Ovary (tissue), 10 donors: ENCODE measurements at regions of chr18 and their contacts with region 1.

Region 1: GRCh38 chr18:49510393-49511115 is 23.5 kb upstream of the C18orf32 start:
- DNase-seq: peak; percentile 13 to 56 (median 41)
- H3K4me3 ChIP-seq: no peak overlapping the region
- H3K27ac ChIP-seq: no peak overlapping the region
- H3K4me1 ChIP-seq: no peaks in the 10 kb centered on the region
- H3K27me3 ChIP-seq: no peaks in the 10 kb centered on the region
- CTCF ChIP-seq: peak in 1 of 3 donors; percentile 37
- EP300 ChIP-seq: no peak
- POLR2A ChIP-seq: no peak

Region 2: GRCh38 chr18:49656073-49656591 is 145.6 kb after region 1 on chr18:
- intact Hi-C with region 1: no loop called
- DNase-seq: no peak
- H3K4me3 ChIP-seq: no peak overlapping the region
- H3K27ac ChIP-seq: no peak overlapping the region
- H3K4me1 ChIP-seq: peaks cover 4% of the 10 kb centered on the region
- H3K27me3 ChIP-seq: no peaks in the 10 kb centered on the region
- CTCF ChIP-seq: no peak
- EP300 ChIP-seq: no peak
- POLR2A ChIP-seq: no peak

Region 3: DNA sequence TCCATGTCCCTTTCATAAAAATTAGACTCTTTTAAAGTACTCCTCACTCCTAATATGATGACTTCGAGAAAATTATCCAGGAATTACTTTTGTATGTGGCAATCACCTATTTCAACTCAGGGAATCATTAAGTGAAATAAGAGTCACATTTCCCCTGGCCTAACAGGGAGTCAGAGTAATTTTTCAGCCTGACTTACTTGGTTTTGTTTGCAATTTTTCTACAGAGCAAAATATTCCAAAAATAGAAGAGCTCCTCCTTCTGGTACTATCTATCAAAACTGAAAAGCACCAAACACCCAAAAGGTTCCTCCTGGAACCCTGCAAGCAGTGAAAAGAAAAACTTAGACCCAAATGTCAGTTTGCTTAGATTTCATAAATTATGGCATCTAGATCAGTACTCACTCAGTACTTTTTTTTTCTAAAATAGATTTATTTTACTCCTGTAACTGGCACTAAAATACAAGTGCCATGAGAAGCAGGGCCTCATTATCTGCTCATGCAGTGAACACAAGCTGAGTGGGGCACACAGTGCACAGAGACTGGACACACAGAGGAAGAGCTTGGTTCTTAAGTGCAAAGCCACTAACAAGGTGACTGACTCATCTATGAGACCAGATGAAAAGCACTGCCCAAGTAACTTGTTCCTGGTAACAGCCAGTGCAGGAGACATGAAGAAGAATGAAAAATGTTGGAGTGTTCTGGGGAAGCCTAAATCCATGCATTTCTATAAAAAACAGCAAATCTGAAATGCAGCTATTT is 274.1 kb after region 1 on chr18:
- intact Hi-C with region 1: loop called in 1 of 4 experiments (anchors 10 kb)
- DNase-seq: no peak
- H3K4me3 ChIP-seq: no peak overlapping the region
- H3K27ac ChIP-seq: no peak overlapping the region
- H3K4me1 ChIP-seq: no peaks in the 10 kb centered on the region
- H3K27me3 ChIP-seq: no peaks in the 10 kb centered on the region
- CTCF ChIP-seq: peak in 1 of 3 donors; percentile 12
- EP300 ChIP-seq: no peak
- POLR2A ChIP-seq: no peak

Region 4: GRCh38 chr18:49849331-49850217 is 339.0 kb after region 1 on chr18:
- intact Hi-C with region 1: loop called in 2 of 4 experiments (anchors 5 to 10 kb)
- DNase-seq: peak in 4 of 5 donors; percentile 21 to 46 (median 36)
- H3K4me3 ChIP-seq: no peak overlapping the region
- H3K27ac ChIP-seq: no peak overlapping the region
- H3K4me1 ChIP-seq: no peaks in the 10 kb centered on the region
- H3K27me3 ChIP-seq: no peaks in the 10 kb centered on the region
- CTCF ChIP-seq: no peak
- EP300 ChIP-seq: no peak
- POLR2A ChIP-seq: no peak

Region 5: DNA sequence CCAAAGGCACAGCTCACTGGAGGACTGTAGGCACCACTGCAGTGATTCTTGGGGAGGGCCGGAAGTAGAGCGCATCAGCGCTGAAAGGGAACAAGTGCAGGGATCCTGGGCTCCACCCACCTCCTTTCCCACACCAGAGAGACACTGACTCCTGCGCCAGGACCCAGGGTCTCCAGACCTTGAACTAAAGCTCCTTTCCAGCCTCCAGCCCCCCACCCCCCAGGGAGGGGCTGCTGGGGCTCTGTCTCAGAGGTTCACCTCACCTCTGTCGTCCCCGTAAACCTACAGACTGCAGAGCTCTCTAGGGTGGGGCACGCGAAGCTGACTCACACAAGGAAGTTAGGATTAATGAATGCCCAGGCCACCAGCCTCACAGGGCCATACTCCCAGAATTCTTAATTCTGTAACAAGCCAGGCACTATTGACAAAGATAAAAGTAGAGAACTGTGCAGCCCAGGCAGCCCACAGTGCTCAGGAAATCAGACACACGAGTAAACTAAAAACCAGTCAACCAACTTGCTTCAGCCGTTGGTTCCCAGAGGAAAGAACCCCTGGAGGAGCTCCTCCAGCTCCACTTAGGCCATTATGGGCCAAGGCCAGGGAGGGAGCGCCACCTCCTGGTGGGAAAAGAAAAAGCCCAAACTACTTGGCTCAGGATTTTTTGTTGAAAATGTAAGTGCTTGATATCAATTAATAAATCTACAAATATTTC is 347.9 kb after region 1 on chr18:
- intact Hi-C with region 1: loop called in 3 of 4 experiments (anchors 5 to 10 kb)
- DNase-seq: peak; percentile 32 to 76 (median 61)
- H3K4me3 ChIP-seq: no peak overlapping the region
- H3K27ac ChIP-seq: no peak overlapping the region
- H3K4me1 ChIP-seq: no peaks in the 10 kb centered on the region
- H3K27me3 ChIP-seq: no peaks in the 10 kb centered on the region
- CTCF ChIP-seq: peak; percentile 61 to 68 (median 63)
- EP300 ChIP-seq: no peak
- POLR2A ChIP-seq: no peak